PC-9 (cell line): ENCODE measurements at regions of chr6 and their contacts with region 1.

Region 1: DNA sequence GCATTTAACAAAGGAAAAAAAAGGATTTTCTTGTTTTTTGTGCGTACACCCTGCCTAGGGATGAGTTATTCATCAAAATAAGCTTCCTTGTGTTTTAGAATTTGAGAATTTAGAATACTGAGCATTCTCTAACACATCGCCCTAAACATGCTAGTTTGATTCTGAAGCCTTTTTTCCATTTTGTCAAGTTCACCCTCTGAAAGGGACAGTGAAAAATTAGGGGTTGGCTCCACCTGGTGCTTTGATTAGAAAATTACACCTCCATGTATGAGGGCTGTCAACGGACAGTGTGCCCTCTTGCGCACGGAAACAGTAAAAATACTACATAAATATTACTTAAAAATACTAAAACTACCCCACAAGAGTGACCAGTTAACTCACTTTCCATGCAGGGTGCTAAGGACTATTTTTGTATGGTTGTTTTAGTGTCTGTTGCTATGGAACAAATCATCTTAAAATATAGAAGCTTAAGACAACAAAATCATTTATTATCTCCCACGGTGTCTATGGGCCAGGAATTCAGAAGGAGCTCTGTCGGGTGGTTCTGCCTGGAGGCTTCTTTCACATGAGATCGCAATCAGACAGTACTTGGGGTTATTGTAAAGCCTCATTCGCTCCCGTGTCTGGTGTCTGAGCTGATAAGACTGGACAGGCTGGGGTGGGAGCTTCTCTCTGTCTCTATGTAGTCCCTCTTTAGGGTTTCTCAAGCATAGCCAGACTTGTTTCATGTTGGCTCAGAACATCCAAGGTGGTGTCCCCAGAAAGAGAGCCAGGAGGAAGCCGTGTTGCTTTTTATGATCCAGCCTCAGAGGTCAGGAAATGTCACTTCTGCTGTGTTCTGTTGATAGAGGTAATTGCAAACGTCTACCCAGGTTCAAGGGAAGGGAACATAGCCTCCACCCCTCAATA is 41.1 kb upstream of the TMEM170B start:
- DNase-seq: peak; percentile 63 to 77
- H3K4me3 ChIP-seq: no peak overlapping the region
- H3K27ac ChIP-seq: peak overlapping the region; percentile 49
- H3K4me1 ChIP-seq: peaks cover 12% of the 10 kb centered on the region
- H3K27me3 ChIP-seq: no peaks in the 10 kb centered on the region
- CTCF ChIP-seq: peak; percentile 87

Region 2: GRCh38 chr6:10954590-10955010 is 541.8 kb before region 1 on chr6:
- CTCF ChIA-PET with region 1: interaction called, 3 read pairs
- POLR2A ChIA-PET with region 1: no interaction called
- intact Hi-C with region 1: loop called (anchors 1 kb)
- DNase-seq: peak in 1 of 2 experiments; percentile 57
- H3K4me3 ChIP-seq: no peak overlapping the region
- H3K27ac ChIP-seq: no peak overlapping the region
- H3K4me1 ChIP-seq: no peaks in the 10 kb centered on the region
- H3K27me3 ChIP-seq: no peaks in the 10 kb centered on the region
- CTCF ChIP-seq: peak; percentile 46

Region 3: DNA sequence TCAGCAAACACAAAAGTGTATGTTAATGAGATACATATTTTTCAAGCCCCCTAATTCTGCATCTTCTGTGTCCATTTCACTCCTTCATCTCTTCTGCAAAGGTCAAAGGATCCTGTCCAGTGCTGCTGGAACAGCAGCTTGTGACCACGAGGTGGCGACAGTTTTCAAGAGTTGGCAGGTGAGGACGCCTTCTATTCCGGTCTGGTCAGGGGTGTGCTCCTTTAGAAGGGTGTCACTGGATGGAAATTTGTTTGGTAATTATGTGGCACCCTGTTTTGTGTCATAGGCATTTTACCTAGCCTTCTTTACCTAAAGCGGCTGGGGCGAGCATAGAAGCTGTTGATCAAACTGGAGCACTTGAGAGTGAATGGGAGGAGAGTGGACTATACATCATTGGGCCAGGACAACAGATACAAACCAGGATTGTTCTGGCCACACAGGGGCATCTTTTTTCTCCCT is 352.0 kb before region 1 on chr6:
- CTCF ChIA-PET with region 1: interaction called, 15 read pairs
- POLR2A ChIA-PET with region 1: no interaction called
- intact Hi-C with region 1: loop called (anchors 1 kb)
- DNase-seq: peak; percentile 59 to 82
- H3K4me3 ChIP-seq: no peak overlapping the region
- H3K27ac ChIP-seq: no peak overlapping the region
- H3K4me1 ChIP-seq: no peaks in the 10 kb centered on the region
- H3K27me3 ChIP-seq: no peaks in the 10 kb centered on the region
- CTCF ChIP-seq: peak; percentile 84

Region 4: DNA sequence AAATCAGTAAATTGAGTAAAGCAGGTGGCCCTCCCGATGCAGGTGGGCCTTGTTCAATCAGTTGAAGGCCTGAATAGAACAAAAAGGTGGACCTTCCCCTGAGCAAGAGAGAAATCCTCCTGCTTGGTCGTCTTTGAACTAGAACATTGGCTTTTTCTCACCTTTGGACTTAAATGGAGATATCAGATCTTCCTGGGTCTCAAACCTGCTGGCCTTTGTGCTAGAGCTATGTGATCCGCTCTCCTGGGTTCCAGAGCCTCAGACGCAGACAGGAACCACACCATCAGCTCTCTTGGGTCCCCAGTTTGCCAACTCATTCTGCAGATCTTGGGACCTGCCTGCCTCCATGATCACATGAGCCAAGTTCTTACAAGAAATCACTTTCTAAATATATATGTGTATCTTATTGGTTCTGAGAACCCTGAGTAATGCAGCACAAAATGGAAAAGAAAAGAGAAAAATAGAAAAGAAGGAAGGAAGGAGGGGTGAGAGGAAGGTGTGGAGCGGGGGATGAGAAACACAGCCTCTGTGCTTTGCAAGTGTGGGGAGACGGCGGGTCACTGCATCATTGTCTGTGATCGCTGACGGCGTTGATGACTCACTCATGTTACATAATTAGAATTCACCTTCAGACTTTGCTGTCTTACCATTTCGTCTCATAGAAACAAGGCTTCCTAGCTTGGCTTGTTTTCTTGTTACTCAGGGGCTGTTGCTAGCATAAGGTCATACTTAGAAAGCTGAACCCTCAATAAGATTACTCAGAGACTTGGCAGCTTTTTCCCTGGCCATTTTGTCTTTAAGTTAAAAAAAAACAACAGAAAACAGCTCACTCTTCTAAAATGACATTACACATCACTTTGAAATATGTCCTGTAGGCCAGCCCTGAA is 178.3 kb before region 1 on chr6:
- CTCF ChIA-PET with region 1: no interaction called
- POLR2A ChIA-PET with region 1: no interaction called
- intact Hi-C with region 1: loop called (anchors 1 kb)
- DNase-seq: peak; percentile 84 to 96
- H3K4me3 ChIP-seq: peak overlapping the region; percentile 24; the same call in 1 of the 2 replicates
- H3K27ac ChIP-seq: peak overlapping the region; percentile 85
- H3K4me1 ChIP-seq: peaks cover 34% of the 10 kb centered on the region
- H3K27me3 ChIP-seq: no peaks in the 10 kb centered on the region
- CTCF ChIP-seq: no peak

Region 5: GRCh38 chr6:11414176-11414963 is 82.0 kb before region 1 on chr6:
- CTCF ChIA-PET with region 1: interaction called, 6 read pairs
- POLR2A ChIA-PET with region 1: interaction called, 4 read pairs
- intact Hi-C with region 1: loop called (anchors 1 kb)
- DNase-seq: peak; percentile 69 to 94
- H3K4me3 ChIP-seq: peak overlapping the region; percentile 19; the same call in 1 of the 2 replicates
- H3K27ac ChIP-seq: peak overlapping the region; percentile 95
- H3K4me1 ChIP-seq: peaks cover 46% of the 10 kb centered on the region
- H3K27me3 ChIP-seq: no peaks in the 10 kb centered on the region
- CTCF ChIP-seq: no peak

Region 6: DNA sequence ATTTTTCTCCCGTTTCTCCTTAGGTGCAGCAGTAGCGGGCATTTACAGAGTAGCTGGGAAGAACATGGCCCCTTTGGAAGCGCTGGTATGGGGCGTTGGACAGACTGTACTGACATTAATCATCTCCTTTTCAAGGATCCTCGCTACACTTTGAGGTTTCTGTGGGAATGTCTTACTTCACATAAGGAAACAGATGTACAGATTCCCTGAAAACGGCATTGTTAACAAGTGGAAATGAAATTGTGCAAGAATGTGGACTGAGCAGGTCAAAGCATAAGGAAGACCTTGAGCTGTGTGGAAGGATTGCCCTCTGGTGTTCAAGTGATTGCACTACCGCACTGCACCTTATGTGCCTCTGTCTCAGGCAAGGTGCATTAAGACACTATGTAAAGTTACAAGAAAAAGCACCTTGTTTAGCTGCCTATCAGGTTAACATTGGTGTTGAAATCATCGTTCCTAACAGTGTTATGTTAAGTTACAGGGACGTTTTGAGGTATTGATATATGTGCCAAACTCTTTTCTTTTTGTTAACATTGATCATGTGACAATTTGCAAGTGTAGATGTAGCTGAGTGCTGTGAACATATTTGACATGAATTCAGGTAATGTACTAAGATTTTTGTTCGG is 79.1 kb after region 1 on chr6:
- CTCF ChIA-PET with region 1: interaction called, 4 read pairs
- POLR2A ChIA-PET with region 1: no interaction called
- intact Hi-C with region 1: loop called (anchors 1 kb)
- DNase-seq: peak; percentile 75 to 86
- H3K4me3 ChIP-seq: no peak overlapping the region
- H3K27ac ChIP-seq: no peak overlapping the region
- H3K4me1 ChIP-seq: peaks cover 3% of the 10 kb centered on the region
- H3K27me3 ChIP-seq: no peaks in the 10 kb centered on the region
- CTCF ChIP-seq: peak; percentile 99

Region 7: DNA sequence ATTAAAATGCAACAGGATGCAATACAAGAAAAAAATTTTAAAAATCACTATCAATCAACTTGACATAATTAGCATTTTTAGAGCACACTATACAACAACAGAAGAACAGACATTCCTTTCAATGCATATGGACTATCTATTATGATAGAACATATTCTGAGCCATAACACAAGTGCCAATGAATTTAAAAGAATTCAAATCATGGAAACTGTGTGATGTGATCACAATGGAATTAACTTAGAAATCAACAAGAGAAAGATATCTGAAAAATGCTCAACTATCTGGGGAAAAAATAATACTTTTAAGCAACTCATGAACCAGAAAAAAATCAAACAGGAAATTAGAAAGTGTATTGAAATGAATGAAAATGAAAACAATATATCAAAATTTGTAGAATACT is 175.8 kb after region 1 on chr6:
- CTCF ChIA-PET with region 1: no interaction called
- POLR2A ChIA-PET with region 1: no interaction called
- intact Hi-C with region 1: no loop called
- DNase-seq: no peak
- H3K4me3 ChIP-seq: no peak overlapping the region
- H3K27ac ChIP-seq: no peak overlapping the region
- H3K4me1 ChIP-seq: no peaks in the 10 kb centered on the region
- H3K27me3 ChIP-seq: no peaks in the 10 kb centered on the region
- CTCF ChIP-seq: no peak